CD4-positive, alpha-beta memory T cell (primary cell): ENCODE measurements at regions of chr14 and their contacts with region 1.

Region 1: GRCh38 chr14:91060351-91061055 is at the start of gene RPS6KA5:
- DNase-seq: peak; percentile 99 to 100 (median 100)
- H3K4me3 ChIP-seq: peak within 1 kb of the TSS; percentile 17 to 78
- H3K4me3 Mint-ChIP-seq: peak within 1 kb of the TSS; percentile 87 to 90 (median 88)
- H3K27ac ChIP-seq: peak within 1 kb of the TSS; percentile 63
- H3K27ac Mint-ChIP-seq: peak within 1 kb of the TSS; percentile 73 to 90 (median 80)
- H3K4me1 ChIP-seq: peaks cover 67% of the 10 kb centered on the region
- H3K4me1 Mint-ChIP-seq: peaks cover 44 to 72% (median 57%) of the 10 kb centered on the region in 4 donors
- H3K27me3 ChIP-seq: no peaks in the 10 kb centered on the region
- H3K27me3 Mint-ChIP-seq: no peaks in the 10 kb centered on the region
- total RNA-seq, gene RPS6KA5: 42.9 to 44.7 TPM

Region 2: DNA sequence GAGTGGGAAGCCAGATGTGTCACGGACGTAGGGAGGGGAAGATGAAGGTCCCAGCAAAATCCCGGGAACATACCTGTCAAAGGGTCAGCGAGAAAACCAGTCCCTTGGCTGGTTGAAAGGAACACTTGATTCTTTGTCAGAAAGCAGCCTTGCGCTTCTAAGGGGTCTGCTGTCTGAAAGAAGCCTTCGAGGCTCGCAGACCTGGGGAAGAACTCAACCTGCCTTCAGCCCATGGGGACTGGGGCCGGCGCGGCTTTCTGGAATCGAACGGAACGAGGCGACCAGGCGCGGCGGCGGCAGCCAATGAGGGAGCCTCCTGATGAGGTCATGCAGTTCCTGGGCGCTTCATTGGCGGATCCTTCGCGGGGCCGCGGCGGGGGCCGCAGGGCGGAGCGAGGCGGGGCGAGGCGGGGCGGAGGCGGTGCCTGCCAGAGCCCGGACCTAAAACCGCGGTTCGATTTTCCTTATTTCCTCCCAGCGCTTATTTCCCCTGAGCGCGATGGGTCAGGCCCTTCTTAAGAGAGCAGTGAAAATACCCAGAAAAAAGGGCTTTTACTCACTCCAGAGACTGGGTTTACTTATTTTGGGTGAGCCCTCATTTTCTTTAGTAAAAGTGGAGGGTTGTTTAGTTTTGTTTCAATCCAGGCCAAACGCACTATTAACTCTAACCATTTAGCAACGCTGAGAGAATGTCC is 232.4 kb before region 1 on chr14:
- CTCF ChIA-PET with region 1: no interaction called
- POLR2A ChIA-PET with region 1: no interaction called
- intact Hi-C with region 1: loop called (anchors 1 kb)
- DNase-seq: peak; percentile 86 to 91 (median 88)
- H3K4me3 ChIP-seq: peak overlapping the region; percentile 55 to 71
- H3K4me3 Mint-ChIP-seq: peak overlapping the region; percentile 79 to 92 (median 84)
- H3K27ac ChIP-seq: peak overlapping the region; percentile 57
- H3K27ac Mint-ChIP-seq: peak overlapping the region; percentile 82 to 96 (median 94)
- H3K4me1 ChIP-seq: peaks cover 20% of the 10 kb centered on the region
- H3K4me1 Mint-ChIP-seq: peaks cover 8 to 28% (median 18%) of the 10 kb centered on the region in 4 donors
- H3K27me3 ChIP-seq: no peaks in the 10 kb centered on the region
- H3K27me3 Mint-ChIP-seq: no peaks in the 10 kb centered on the region

Region 3: DNA sequence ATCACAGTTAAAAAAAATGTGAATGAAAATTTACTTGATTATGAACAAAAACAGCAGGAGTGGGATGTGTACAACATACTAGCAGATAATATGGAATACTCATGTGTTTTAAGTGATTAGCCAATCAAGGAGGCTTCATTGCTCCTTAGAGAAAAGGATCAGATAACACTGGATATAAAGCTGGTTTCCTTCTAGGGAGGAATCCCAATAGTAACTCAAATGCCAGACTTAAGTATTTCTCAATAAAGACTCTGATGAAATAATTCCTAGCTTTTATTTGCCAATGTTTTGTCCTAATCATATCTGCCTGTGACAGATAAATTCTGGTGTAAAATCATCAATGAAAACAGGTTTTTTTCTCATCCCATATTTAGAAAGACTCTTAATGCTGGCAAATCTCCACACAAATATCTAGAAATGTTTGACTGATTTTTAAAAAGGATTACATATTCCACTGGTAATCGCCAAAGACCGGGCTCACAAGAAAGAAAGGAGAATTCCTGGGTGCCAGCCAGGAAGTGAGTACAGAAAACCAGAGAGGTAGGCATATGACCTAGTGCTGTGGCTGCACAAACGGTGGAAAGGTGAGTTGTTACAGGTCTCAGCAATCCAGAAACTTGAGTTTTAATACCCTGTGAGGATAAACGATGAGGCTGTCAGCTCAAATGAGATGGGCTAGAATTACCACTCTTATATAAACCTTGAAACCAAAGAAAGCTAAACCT is 135.7 kb before region 1 on chr14:
- CTCF ChIA-PET with region 1: no interaction called
- POLR2A ChIA-PET with region 1: no interaction called
- intact Hi-C with region 1: no loop called
- DNase-seq: no peak
- H3K4me3 ChIP-seq: no peak overlapping the region
- H3K4me3 Mint-ChIP-seq: no peak overlapping the region
- H3K27ac ChIP-seq: no peak overlapping the region
- H3K27ac Mint-ChIP-seq: no peak overlapping the region
- H3K4me1 ChIP-seq: no peaks in the 10 kb centered on the region
- H3K4me1 Mint-ChIP-seq: peaks cover 0 to 1% (median 0%) of the 10 kb centered on the region in 4 donors
- H3K27me3 ChIP-seq: no peaks in the 10 kb centered on the region
- H3K27me3 Mint-ChIP-seq: no peaks in the 10 kb centered on the region

Region 4: DNA sequence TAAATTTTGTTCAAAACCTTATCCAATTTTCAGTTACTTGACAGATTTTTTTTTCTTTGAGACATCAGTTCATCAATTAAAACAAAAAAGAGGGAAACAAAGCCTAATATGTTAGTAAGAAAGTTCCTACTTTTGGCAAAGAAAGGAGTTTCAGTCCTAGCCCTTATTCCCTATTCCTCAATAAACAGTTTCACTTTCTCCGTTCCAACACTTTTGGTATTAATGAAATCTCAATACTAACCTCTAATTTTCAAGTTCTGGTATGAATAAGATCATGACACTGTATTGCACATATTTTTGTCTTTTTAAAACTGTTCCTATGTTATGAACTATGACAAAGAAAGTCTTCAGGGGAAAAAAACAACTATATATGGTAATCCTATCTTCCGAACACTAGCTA is 48.5 kb before region 1 on chr14:
- CTCF ChIA-PET with region 1: no interaction called
- POLR2A ChIA-PET with region 1: no interaction called
- intact Hi-C with region 1: no loop called
- DNase-seq: no peak
- H3K4me3 ChIP-seq: no peak overlapping the region
- H3K4me3 Mint-ChIP-seq: no peak overlapping the region
- H3K27ac ChIP-seq: no peak overlapping the region
- H3K27ac Mint-ChIP-seq: no peak overlapping the region
- H3K4me1 ChIP-seq: peaks cover 37% of the 10 kb centered on the region
- H3K4me1 Mint-ChIP-seq: peaks cover 32 to 49% (median 37%) of the 10 kb centered on the region in 4 donors
- H3K27me3 ChIP-seq: no peaks in the 10 kb centered on the region
- H3K27me3 Mint-ChIP-seq: no peaks in the 10 kb centered on the region

Region 5: DNA sequence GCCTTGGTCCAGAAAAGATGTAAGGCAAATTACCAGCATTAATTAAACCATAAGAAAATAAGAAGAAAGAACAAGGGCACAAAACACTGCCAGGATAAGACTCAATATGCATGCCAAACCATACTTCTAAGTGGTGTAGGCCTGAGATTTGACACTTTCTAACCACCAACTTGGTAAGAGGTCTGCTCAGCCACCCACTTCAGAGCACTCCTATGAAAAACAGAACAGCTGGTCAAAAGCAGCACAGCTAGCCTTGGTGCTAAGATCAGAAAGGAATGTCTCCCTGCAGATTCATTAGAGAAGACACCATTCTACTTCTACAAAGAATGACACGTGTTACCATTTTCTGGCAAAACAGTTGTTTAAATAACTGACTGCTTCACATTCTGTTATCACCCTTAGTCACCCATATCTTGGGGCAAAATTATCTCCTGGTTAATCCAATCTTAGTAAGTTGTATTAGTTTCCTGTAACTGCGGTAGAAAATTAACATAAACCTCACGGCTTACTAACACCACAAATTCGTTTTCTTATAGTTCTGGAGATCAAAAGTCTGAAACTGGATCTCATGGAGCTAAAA is 13.2 kb before region 1 on chr14:
- CTCF ChIA-PET with region 1: interaction called, 7 read pairs
- POLR2A ChIA-PET with region 1: interaction called, 12 read pairs
- intact Hi-C with region 1: no loop called
- DNase-seq: peak in 1 of 5 donors; percentile 11
- H3K4me3 ChIP-seq: no peak overlapping the region
- H3K4me3 Mint-ChIP-seq: peak overlapping the region in 5 of 8 donors; percentile 15 to 56 (median 26)
- H3K27ac ChIP-seq: no peak overlapping the region
- H3K27ac Mint-ChIP-seq: peak overlapping the region in 6 of 7 donors; percentile 4 to 71 (median 30)
- H3K4me1 ChIP-seq: peaks cover 43% of the 10 kb centered on the region
- H3K4me1 Mint-ChIP-seq: peaks cover 37 to 48% (median 42%) of the 10 kb centered on the region in 4 donors
- H3K27me3 ChIP-seq: no peaks in the 10 kb centered on the region
- H3K27me3 Mint-ChIP-seq: no peaks in the 10 kb centered on the region

Region 6: DNA sequence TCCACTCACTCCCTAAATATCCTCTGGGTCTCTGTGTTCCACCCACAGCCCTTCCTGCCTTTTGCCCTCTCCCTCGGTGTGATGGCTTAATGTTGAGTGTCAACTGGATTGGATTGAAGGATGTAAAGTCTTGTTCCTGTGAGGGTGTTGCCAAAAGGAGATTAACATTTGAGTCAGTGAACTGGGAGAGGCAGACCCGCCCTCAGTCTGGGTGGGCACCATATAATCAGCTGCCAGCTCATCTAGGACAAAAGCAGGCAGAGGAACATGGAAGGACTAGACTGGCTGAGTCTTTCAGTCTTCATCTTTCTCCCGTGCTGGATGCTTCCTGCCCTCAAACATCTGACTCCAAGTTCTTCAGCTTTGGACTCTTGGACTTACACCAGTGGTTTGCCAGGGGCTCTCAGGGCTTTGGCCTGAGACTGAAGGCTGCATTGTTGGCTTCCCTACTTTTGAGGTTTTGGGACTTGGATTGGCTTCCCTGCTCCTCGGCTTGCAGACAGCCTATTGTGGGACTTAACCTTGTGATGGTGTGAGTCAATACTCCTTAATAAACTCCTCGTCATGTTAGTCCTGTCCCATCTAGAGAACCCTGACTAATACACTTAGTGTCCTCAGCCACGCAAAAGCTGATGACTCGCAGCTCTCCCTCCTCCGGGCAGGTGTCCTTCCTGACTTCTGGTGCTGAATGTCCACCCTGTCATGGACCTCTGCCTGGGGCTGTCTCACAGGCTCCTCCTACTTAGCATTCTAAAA is 59.2 kb after region 1 on chr14:
- CTCF ChIA-PET with region 1: interaction called, 74 read pairs
- POLR2A ChIA-PET with region 1: interaction called, 4 read pairs
- intact Hi-C with region 1: loop called (anchors 1 kb)
- DNase-seq: no peak
- H3K4me3 ChIP-seq: no peak overlapping the region
- H3K4me3 Mint-ChIP-seq: peak overlapping the region in 7 of 8 donors; percentile 11 to 82 (median 45)
- H3K27ac ChIP-seq: peak overlapping the region; percentile 6
- H3K27ac Mint-ChIP-seq: peak overlapping the region; percentile 45 to 94 (median 80)
- H3K4me1 ChIP-seq: peaks cover 66% of the 10 kb centered on the region
- H3K4me1 Mint-ChIP-seq: peaks cover 52 to 84% (median 67%) of the 10 kb centered on the region in 4 donors
- H3K27me3 ChIP-seq: no peaks in the 10 kb centered on the region
- H3K27me3 Mint-ChIP-seq: no peaks in the 10 kb centered on the region

Region 7: GRCh38 chr14:91317381-91318308 is 257.1 kb after region 1 on chr14:
- CTCF ChIA-PET with region 1: no interaction called
- POLR2A ChIA-PET with region 1: interaction called, 4 read pairs
- intact Hi-C with region 1: loop called (anchors 5 kb)
- DNase-seq: peak; percentile 84 to 87 (median 85)
- H3K4me3 ChIP-seq: peak overlapping the region; percentile 17 to 29
- H3K4me3 Mint-ChIP-seq: peak overlapping the region; percentile 76 to 90 (median 84)
- H3K27ac ChIP-seq: peak overlapping the region; percentile 75
- H3K27ac Mint-ChIP-seq: peak overlapping the region; percentile 98 to 100 (median 99)
- H3K4me1 ChIP-seq: peaks cover 98% of the 10 kb centered on the region
- H3K4me1 Mint-ChIP-seq: peaks cover 45 to 88% (median 68%) of the 10 kb centered on the region in 4 donors
- H3K27me3 ChIP-seq: no peaks in the 10 kb centered on the region
- H3K27me3 Mint-ChIP-seq: no peaks in the 10 kb centered on the region

Region 8: GRCh38 chr14:91396959-91397815 is 336.7 kb after region 1 on chr14:
- CTCF ChIA-PET with region 1: no interaction called
- POLR2A ChIA-PET with region 1: no interaction called
- intact Hi-C with region 1: no loop called
- DNase-seq: peak; percentile 64 to 85 (median 72)
- H3K4me3 ChIP-seq: peak overlapping the region; percentile 49 to 61
- H3K4me3 Mint-ChIP-seq: peak overlapping the region; percentile 79 to 99 (median 82)
- H3K27ac ChIP-seq: peak overlapping the region; percentile 65
- H3K27ac Mint-ChIP-seq: peak overlapping the region; percentile 90 to 98 (median 95)
- H3K4me1 ChIP-seq: peaks cover 97% of the 10 kb centered on the region
- H3K4me1 Mint-ChIP-seq: peaks cover 70 to 98% (median 84%) of the 10 kb centered on the region in 4 donors
- H3K27me3 ChIP-seq: no peaks in the 10 kb centered on the region
- H3K27me3 Mint-ChIP-seq: no peaks in the 10 kb centered on the region

Region 9: GRCh38 chr14:91536327-91536726 is 475.8 kb after region 1 on chr14:
- CTCF ChIA-PET with region 1: no interaction called
- POLR2A ChIA-PET with region 1: no interaction called
- intact Hi-C with region 1: no loop called
- DNase-seq: no peak
- H3K4me3 ChIP-seq: no peak overlapping the region
- H3K4me3 Mint-ChIP-seq: no peak overlapping the region
- H3K27ac ChIP-seq: no peak overlapping the region
- H3K27ac Mint-ChIP-seq: no peak overlapping the region
- H3K4me1 ChIP-seq: no peaks in the 10 kb centered on the region
- H3K4me1 Mint-ChIP-seq: no peaks in the 10 kb centered on the region
- H3K27me3 ChIP-seq: no peaks in the 10 kb centered on the region
- H3K27me3 Mint-ChIP-seq: peaks cover 5 to 12% of the 10 kb centered on the region in 2 donors